ENCODE measurements at regions of chr18 and their contacts with region 1.

Region 1: DNA sequence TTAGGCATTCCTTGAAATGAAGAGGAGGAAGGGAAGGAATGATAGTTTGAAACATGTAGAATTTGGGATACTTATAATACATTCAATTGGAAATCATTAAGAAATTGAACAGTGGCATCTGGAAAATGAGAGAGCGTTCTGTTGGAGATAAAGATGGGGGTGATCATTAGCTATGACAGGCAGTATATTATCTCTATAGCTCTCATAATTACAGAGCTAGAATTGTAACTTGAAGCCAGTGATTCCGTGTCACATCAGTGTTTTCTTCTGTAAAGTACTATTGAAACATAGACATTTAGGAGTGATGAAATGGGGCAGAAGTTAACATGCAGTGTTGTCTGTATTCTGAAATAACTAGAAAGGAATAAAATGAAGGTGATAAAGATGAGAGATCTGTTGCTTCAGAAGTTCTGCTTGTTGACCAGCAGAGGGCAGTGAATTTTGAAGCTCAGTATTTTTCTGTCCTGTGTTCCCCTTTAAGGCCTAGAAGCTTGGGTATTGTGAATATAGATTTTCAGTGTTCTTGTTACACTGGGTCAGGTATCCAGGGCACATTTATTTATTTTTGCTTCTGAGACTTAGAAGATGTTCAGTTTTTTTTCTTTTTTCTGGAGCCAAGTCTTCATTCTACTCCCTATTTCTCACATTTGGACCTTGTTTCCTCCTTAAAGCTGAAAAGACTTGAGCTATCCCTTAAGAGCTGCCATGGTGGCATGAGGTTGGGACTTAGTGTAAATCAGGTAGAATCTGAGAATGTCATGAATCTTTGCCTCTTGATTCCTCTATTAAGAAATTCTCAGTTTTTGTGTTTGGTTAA is 157.4 kb downstream of the TAF4B start:
- DNase-seq: peak; percentile 52
- H3K4me3 ChIP-seq: no peak overlapping the region
- H3K27ac ChIP-seq: no peak overlapping the region
- H3K4me1 ChIP-seq: peaks cover 12% of the 10 kb centered on the region
- H3K27me3 ChIP-seq: no peaks in the 10 kb centered on the region
- CTCF ChIP-seq: peak; percentile 55 to 57
- POLR2A ChIP-seq: no peak

Region 2: DNA sequence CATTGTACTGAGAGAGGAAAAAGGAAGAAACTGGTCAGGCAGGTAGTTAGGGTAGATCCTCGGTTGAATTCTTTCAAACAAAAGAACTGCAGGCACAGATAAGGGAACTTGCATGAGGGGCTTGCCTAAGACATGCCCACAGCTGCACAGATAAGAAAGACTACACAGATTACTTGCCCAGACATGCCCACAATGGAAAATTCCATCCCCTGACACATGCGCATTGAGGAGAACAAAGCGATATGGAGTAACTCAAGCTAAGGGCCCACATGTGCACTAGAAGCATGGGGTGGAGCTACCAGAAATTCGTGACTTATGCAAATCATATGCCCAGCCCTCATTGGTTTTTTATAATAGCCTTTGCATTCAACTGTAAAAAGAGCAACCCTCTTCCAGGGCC is 850.4 kb before region 1 on chr18:
- CTCF ChIA-PET with region 1: no interaction called
- POLR2A ChIA-PET with region 1: no interaction called
- dilution Hi-C with region 1: no loop called
- intact Hi-C with region 1: no loop called
- DNase-seq: no peak
- H3K4me3 ChIP-seq: no peak overlapping the region
- H3K27ac ChIP-seq: no peak overlapping the region
- H3K4me1 ChIP-seq: no peaks in the 10 kb centered on the region
- H3K27me3 ChIP-seq: no peaks in the 10 kb centered on the region
- CTCF ChIP-seq: no peak
- POLR2A ChIP-seq: no peak

Region 3: DNA sequence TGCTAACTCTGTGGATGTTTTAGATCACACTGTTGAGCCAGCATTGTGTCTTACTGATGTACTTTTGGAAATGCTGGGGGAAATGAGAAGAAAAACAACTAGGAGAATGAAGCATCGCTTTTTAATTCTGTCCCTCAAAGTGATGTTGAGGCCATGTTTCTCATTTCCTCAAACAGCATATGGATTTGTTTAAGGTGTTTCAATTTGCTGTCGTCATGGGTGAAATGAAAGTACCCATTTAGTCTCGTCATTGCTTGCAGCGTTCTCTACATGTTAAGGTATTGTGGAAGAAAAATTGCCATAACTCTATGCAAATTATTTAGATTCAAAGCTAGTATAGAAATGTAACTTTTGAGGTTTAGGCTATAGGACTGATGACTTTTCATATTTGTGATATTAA is 13.4 kb after region 1 on chr18:
- CTCF ChIA-PET with region 1: interaction called, 12 read pairs
- POLR2A ChIA-PET with region 1: no interaction called
- dilution Hi-C with region 1: no loop called
- intact Hi-C with region 1: no loop called
- DNase-seq: no peak
- H3K4me3 ChIP-seq: no peak overlapping the region
- H3K27ac ChIP-seq: no peak overlapping the region
- H3K4me1 ChIP-seq: no peaks in the 10 kb centered on the region
- H3K27me3 ChIP-seq: no peaks in the 10 kb centered on the region
- CTCF ChIP-seq: no peak
- POLR2A ChIP-seq: no peak

Region 4: GRCh38 chr18:26480897-26481895 is 97.5 kb after region 1 on chr18:
- CTCF ChIA-PET with region 1: interaction called, 11 read pairs
- POLR2A ChIA-PET with region 1: no interaction called
- dilution Hi-C with region 1: no loop called
- intact Hi-C with region 1: no loop called
- DNase-seq: peak; percentile 92
- H3K4me3 ChIP-seq: no peak overlapping the region
- H3K27ac ChIP-seq: peak overlapping the region; percentile 92
- H3K4me1 ChIP-seq: peaks cover 31% of the 10 kb centered on the region
- H3K27me3 ChIP-seq: no peaks in the 10 kb centered on the region
- CTCF ChIP-seq: no peak
- POLR2A ChIP-seq: no peak

Region 5: DNA sequence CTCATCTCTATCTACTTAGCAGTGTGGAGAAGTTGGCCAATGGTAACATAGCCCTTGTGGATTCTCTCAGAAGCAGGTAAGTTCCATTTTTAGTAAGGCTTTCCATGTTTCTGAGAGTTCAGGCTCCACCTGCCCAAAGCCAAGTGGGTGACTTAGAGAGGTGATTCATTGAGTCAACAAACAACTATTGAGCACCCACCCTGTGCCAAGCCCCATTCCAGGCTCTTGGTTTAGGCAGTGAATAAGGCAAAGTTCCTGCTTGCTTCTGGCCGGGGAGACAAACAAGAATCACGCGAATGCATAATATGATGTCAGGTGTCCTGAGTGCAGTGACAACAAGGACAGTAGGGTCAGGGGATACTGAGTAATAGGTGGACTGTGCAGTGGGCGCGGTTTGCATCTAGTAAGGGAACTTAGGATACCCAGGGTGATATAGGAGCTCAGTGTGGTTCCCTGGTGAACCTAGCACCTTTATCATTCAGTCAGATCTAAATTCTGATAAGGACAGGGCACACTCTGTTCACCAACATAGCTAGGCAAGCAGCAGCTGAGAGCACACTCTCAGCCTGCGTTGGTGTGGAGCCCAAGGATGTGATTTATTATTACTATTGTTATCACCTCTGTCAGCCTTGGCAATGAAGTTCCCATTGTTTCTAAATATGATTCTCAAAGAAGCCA is 196.4 kb after region 1 on chr18:
- CTCF ChIA-PET with region 1: interaction called, 11 read pairs
- POLR2A ChIA-PET with region 1: no interaction called
- dilution Hi-C with region 1: no loop called
- intact Hi-C with region 1: no loop called
- DNase-seq: peak; percentile 3
- H3K4me3 ChIP-seq: no peak overlapping the region
- H3K27ac ChIP-seq: no peak overlapping the region
- H3K4me1 ChIP-seq: no peaks in the 10 kb centered on the region
- H3K27me3 ChIP-seq: peaks cover 10 to 17% of the 10 kb centered on the region in 2 experiments
- CTCF ChIP-seq: no peak
- POLR2A ChIP-seq: no peak

Region 6: DNA sequence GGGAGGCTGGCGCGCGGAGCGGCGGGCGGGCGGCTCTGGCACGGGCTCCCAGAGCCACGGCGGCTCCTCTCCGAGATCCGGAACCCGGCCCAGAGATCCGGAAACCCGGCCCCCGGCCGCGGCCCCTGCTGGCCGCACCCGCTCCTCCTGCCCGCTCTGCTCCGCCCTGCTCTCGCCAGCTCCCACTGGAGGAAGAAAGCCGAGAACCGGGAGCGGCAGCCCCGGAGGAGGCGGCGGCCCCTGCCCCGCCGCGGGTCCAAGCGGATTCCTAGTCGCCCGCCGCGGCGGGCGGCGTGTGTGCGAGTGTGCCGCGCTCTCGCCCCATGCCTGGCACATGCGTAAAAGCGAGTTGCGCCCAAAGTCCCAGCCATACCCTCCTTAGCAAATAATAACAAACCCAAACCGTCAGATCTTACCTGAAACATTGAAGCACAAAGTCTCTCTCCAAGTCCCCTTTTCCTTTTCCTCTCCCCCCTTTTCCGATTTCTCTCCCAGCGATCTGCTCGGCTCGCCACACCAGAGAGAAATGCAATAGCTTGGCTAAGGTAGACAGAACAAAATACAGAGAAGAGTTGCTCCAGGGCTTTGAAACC is 273.4 kb after region 1 on chr18:
- CTCF ChIA-PET with region 1: interaction called, 21 read pairs
- POLR2A ChIA-PET with region 1: no interaction called
- dilution Hi-C with region 1: no loop called
- intact Hi-C with region 1: loop called (anchors 1 kb)
- DNase-seq: peak; percentile 53
- H3K4me3 ChIP-seq: peak overlapping the region; percentile 38 to 63 (median 50)
- H3K27ac ChIP-seq: no peak overlapping the region
- H3K4me1 ChIP-seq: peaks cover 8% of the 10 kb centered on the region
- H3K27me3 ChIP-seq: peaks cover 51 to 72% of the 10 kb centered on the region in 2 experiments
- CTCF ChIP-seq: peak in 1 of 2 donors; percentile 50
- POLR2A ChIP-seq: no peak

Measured in endothelial cell of umbilical vein (primary cell).